HEK293 (cell line): ENCODE measurements at regions of chr16 and their contacts with region 1.

Region 1: GRCh38 chr16:9772526-9773225 is 409.6 kb downstream of the GRIN2A start:
- H3K4me3 ChIP-seq: no peak overlapping the region
- H3K27ac ChIP-seq: no peak overlapping the region
- H3K4me1 ChIP-seq: no peaks in the 10 kb centered on the region
- CTCF ChIP-seq: no peak

Region 2: GRCh38 chr16:9787717-9788116 is 15.0 kb after region 1 on chr16:
- CTCF ChIA-PET with region 1: interaction called, 10 read pairs
- POLR2A ChIA-PET with region 1: no interaction called
- H3K4me3 ChIP-seq: no peak overlapping the region
- H3K27ac ChIP-seq: no peak overlapping the region
- H3K4me1 ChIP-seq: no peaks in the 10 kb centered on the region
- CTCF ChIP-seq: no peak